Activated T-helper 2 cell treated with anti-CD3 and anti-CD28 coated beads, Interferon-gamma antibody, Interleukin-2, Interleukin-4, amounts not matched to agents 10 μg/mL and 5 μg/mL and 100 μg/mL, durations not matched to agents 14 hours and 24 hours and 36 hours (primary cell): ENCODE measurements at regions of chr17 and their contacts with region 1.

Region 1: DNA sequence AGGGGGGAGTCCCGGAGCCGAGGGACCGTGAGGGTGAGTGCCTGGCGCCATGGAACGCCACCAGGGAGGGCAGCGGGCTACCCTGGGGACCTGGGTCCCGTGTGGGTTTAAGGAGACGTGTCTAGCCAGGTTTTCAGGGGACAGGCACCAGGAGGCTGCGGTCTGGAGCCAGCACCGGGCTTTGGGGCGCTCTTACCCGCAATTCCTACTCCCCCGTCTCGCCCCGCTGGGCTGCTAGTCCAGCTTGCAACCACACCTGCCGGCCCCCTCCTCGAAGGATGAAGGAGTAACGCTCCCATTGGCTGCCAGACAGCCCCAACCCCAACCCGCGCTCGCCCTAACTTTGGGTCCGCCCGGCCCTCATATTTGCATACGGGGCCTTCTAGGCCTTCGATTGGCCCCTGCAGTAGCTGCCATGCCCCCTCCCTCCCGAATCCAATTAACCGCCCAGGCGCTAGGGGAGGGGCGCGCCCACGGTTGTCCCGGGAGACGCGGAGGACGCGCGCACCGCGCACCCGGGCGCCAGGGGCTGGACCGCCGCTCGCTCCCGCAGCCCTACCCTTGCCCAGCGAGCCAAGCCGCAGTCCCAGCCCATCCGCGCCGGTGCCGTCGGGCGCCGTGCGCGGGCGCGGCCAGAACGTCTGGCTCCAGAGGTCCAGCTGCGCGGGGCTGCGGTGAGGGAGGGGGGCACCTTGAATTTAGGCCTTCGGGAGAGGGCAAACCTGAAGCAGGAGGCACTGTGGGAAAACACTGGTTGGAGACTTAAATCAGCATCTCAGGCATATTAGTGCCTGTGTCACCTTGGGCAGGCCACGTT is at the start of gene TTLL6:
- DNase-seq: peak; percentile 84
- H3K4me3 Mint-ChIP-seq: peak within 1 kb of the TSS; percentile 77
- H3K27ac Mint-ChIP-seq: no peak within 1 kb of the TSS
- H3K4me1 Mint-ChIP-seq: peaks cover 15% of the 10 kb centered on the region
- H3K27me3 Mint-ChIP-seq: peaks cover 64% of the 10 kb centered on the region
- total RNA-seq, gene TTLL6: 0.07 TPM in 1 of 2 replicates, not detected in the other

Region 2: DNA sequence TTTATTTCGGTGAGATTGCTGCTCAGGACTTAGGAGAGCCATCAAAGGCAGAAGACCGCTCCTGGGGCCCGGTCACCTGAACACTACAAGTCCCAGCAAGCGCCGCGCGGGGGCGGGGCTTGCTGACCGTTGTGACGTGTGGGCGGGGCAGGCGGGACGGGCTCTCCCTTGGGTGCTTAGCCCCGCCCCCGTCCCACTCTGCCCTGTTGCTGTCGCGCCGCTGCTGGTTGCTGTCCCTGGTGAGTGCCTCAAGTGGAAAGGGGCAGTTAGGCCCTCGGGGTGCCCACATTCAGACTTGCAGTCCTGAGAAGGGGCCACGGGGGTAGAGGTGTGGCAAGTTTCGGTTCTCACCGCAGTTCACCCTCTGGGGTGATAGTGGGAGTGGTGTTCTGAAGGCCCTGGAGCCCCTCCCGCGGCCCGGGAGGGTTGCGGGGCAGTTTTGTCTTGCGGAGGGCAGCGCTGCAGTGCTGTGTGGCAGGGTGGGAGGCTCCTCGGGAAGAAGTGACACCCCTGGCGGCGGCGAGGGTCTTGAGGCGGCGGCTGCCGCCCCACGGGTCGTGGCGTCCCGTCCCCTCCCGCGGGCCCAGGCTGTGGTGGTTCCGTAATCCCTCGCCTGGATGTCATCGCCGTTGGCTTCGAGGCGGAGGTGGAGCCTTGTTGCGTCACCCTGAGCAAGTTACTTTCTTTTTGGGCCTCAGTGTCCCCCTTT is 14.0 kb after region 1 on chr17 and contains the start of gene CALCOCO2:
- intact Hi-C with region 1: loop called (anchors 2 kb)
- DNase-seq: peak; percentile 83
- H3K4me3 Mint-ChIP-seq: peak within 1 kb of the TSS; percentile 97
- H3K27ac Mint-ChIP-seq: peak within 1 kb of the TSS; percentile 98
- H3K4me1 Mint-ChIP-seq: peaks cover 41% of the 10 kb centered on the region
- H3K27me3 Mint-ChIP-seq: peaks cover 7% of the 10 kb centered on the region
- total RNA-seq, gene CALCOCO2: 51.7 and 53.7 TPM in 2 replicates

Region 3: GRCh38 chr17:48856122-48856821 is 39.3 kb after region 1 on chr17:
- intact Hi-C with region 1: loop called (anchors 5 kb)
- DNase-seq: no peak
- H3K4me3 Mint-ChIP-seq: peak overlapping the region; percentile 15
- H3K27ac Mint-ChIP-seq: peak overlapping the region; percentile 51
- H3K4me1 Mint-ChIP-seq: peaks cover 33% of the 10 kb centered on the region
- H3K27me3 Mint-ChIP-seq: no peaks in the 10 kb centered on the region